Common myeloid progenitor, CD34-positive (primary cell): ENCODE measurements at regions of chr21 and their contacts with region 1.

Region 1: DNA sequence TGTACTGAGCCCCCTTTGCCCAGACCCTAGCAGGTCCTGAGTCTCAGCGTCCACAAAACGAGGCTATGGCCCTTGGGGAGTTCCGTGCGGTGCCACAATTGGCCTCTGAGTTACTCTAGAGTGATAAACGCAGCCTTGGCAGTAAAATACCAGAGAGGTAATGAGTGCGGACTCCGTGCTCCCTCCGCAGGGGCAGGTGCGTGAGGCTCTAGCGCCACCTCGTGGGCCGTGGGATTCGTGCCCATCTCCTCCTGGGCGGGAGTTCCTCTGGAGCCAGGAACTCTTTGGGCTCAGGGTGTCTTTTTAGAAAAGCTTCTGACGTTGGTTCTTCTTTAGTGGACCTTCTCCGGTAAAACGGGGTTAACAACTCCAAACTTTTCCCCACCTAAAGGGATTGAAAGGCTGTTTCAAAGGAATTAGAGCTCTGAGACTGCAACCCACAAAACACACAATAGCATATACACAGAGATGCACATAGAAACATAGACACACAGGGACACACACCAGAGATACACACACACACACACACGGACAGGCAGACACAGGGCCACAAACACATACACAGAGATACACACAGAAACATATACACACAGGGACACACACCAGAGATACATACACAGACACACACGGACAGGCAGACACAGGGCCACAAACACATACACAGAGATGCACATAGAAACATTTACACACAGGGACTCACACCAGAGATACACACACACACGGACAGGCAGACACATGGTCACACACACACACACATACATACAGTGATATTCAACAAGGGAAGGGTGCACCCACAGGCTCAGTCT is 99.4 kb downstream of the KCNJ15 start:
- DNase-seq: peak; percentile 72 to 83 (median 80)
- H3K4me3 ChIP-seq: peak overlapping the region in 1 of 7 experiments; percentile 4
- H3K27ac ChIP-seq: no peak overlapping the region
- H3K4me1 ChIP-seq: peaks cover 3 to 36% (median 25%) of the 10 kb centered on the region in 4 experiments
- H3K27me3 ChIP-seq: peaks cover 0 to 2% (median 0%) of the 10 kb centered on the region in 5 experiments

Region 2: GRCh38 chr21:38159355-38159754 is 196.8 kb before region 1 on chr21:
- CTCF ChIA-PET with region 1: interaction called, 88 read pairs
- POLR2A ChIA-PET with region 1: no interaction called
- DNase-seq: peak; percentile 80 to 86 (median 81)
- H3K4me3 ChIP-seq: no peak overlapping the region
- H3K27ac ChIP-seq: no peak overlapping the region
- H3K4me1 ChIP-seq: no peaks in the 10 kb centered on the region
- H3K27me3 ChIP-seq: peaks cover 0 to 14% (median 4%) of the 10 kb centered on the region in 5 experiments

Region 3: GRCh38 chr21:38170280-38170679 is 185.9 kb before region 1 on chr21:
- CTCF ChIA-PET with region 1: interaction called, 66 read pairs
- POLR2A ChIA-PET with region 1: no interaction called
- DNase-seq: peak; percentile 3 to 25 (median 12)
- H3K4me3 ChIP-seq: no peak overlapping the region
- H3K27ac ChIP-seq: no peak overlapping the region
- H3K4me1 ChIP-seq: no peaks in the 10 kb centered on the region
- H3K27me3 ChIP-seq: peaks cover 0 to 9% (median 0%) of the 10 kb centered on the region in 5 experiments

Region 4: GRCh38 chr21:38219049-38219628 is 137.1 kb before region 1 on chr21:
- CTCF ChIA-PET with region 1: interaction called, 108 read pairs
- POLR2A ChIA-PET with region 1: no interaction called
- DNase-seq: peak; percentile 82 to 86 (median 84)
- H3K4me3 ChIP-seq: no peak overlapping the region
- H3K27ac ChIP-seq: no peak overlapping the region
- H3K4me1 ChIP-seq: no peaks in the 10 kb centered on the region
- H3K27me3 ChIP-seq: no peaks in the 10 kb centered on the region

Region 5: DNA sequence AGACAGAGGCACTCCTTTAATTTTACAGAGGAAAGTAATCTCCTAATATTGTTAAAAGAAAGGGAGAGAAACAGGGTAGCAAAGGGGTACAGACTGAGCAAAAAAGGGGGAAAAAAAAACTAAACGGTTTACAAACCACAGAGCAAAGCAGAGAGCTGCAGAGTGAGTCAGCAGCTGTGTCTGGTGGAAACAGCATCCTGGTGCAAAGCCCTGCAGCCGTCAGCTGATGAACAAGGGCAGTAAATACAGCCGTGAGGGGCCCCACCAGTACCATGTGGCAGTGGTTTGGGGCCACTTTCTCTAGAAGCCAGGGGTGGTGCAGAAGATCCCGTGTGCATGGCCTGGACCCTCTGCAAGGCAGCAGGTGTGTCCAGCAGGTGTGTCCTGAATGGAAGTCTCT is 30.8 kb after region 1 on chr21:
- CTCF ChIA-PET with region 1: interaction called, 11 read pairs
- POLR2A ChIA-PET with region 1: no interaction called
- DNase-seq: peak; percentile 74 to 96 (median 93)
- H3K4me3 ChIP-seq: peak overlapping the region in 3 of 7 experiments; percentile 30 to 43 (median 37)
- H3K27ac ChIP-seq: peak overlapping the region; percentile 71 to 78
- H3K4me1 ChIP-seq: peaks cover 25 to 85% (median 74%) of the 10 kb centered on the region in 4 experiments
- H3K27me3 ChIP-seq: no peaks in the 10 kb centered on the region